GM12878 (cell line): ENCODE measurements at regions of chr16 and their contacts with region 1.

Region 1: DNA sequence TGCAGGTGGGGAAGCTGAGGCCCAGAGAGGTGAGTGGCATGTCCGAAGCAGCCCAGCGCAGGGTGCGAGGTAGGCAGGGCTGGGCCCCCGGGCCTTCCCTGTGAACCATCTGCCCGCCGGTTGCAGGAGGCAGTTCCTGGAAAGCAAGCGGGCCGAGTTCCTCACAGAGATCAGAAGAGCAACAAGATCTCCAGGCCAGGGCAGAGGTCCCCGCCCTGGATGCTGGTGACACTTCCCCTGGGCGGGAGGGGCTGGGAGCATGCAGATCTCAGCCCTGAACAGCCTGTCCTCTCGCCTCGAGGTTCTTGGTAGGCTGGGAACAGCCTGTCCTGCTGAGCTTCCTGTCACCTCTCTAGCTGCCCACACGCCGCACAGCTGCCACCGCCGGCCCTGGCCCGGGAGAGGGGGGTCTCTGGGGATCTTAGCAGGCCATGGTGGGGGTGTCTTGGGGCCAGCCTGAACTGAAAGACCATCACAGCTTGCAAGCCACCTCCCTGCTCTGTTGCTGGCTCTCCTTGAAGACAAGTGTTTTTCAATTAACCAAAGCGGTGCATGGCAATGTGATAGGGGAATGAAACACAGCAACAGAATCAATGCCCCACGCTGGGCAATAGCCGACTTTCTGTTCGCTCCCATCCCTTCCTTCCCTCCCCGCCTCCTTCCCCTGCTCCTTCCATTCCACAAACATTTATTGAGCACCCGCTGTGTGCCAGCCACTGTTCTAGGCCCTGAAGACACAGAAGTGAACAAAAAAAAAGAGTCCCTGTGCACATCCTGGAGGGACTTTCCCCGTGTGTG is 31.7 kb downstream of the SOCS1 start:
- DNase-seq: peak; percentile 57
- ATAC-seq: peak; percentile 75
- H3K4me3 ChIP-seq: peak overlapping the region; percentile 19; the same call in 1 of the 2 replicates
- H3K27ac ChIP-seq: peak overlapping the region; percentile 94
- H3K4me1 ChIP-seq: peaks cover 28% of the 10 kb centered on the region
- H3K27me3 ChIP-seq: no peaks in the 10 kb centered on the region
- CTCF ChIP-seq: no peak
- EP300 ChIP-seq: no peak
- POLR2A ChIP-seq: peak; percentile 55
- RAD21 ChIP-seq: no peak

Region 2: GRCh38 chr16:11201498-11202259 is 22.6 kb before region 1 on chr16:
- CTCF ChIA-PET with region 1: interaction called, 13 read pairs
- POLR2A ChIA-PET with region 1: interaction called, 32 read pairs
- RAD21 ChIA-PET with region 1: interaction called, 59 read pairs
- SMC1A ChIA-PET with region 1: interaction called, 23 read pairs
- in situ Hi-C with region 1: no loop called
- intact Hi-C with region 1: loop called (anchors 2 kb)
- DNase-seq: no peak
- ATAC-seq: peak; percentile 5
- H3K4me3 ChIP-seq: no peak overlapping the region
- H3K27ac ChIP-seq: peak overlapping the region; percentile 45
- H3K4me1 ChIP-seq: peaks cover 67% of the 10 kb centered on the region
- H3K27me3 ChIP-seq: no peaks in the 10 kb centered on the region
- CTCF ChIP-seq: no peak
- EP300 ChIP-seq: peak in 1 of 2 experiments; percentile 28; a peak in 1 of 4 replicates
- POLR2A ChIP-seq: no peak
- RAD21 ChIP-seq: no peak

Region 3: GRCh38 chr16:11208916-11209665 is 15.2 kb before region 1 on chr16:
- CTCF ChIA-PET with region 1: interaction called, 6 read pairs
- POLR2A ChIA-PET with region 1: interaction called, 32 read pairs
- RAD21 ChIA-PET with region 1: interaction called, 59 read pairs
- SMC1A ChIA-PET with region 1: interaction called, 34 read pairs
- in situ Hi-C with region 1: no loop called
- intact Hi-C with region 1: no loop called
- DNase-seq: peak; percentile 51
- ATAC-seq: peak; percentile 26
- H3K4me3 ChIP-seq: no peak overlapping the region
- H3K27ac ChIP-seq: peak overlapping the region; percentile 59
- H3K4me1 ChIP-seq: peaks cover 63% of the 10 kb centered on the region
- H3K27me3 ChIP-seq: no peaks in the 10 kb centered on the region
- CTCF ChIP-seq: no peak
- EP300 ChIP-seq: no peak
- POLR2A ChIP-seq: no peak
- RAD21 ChIP-seq: no peak

Region 4: GRCh38 chr16:11248133-11248532 is 23.8 kb after region 1 on chr16:
- CTCF ChIA-PET with region 1: interaction called, 6 read pairs
- POLR2A ChIA-PET with region 1: interaction called, 53 read pairs
- RAD21 ChIA-PET with region 1: interaction called, 76 read pairs
- SMC1A ChIA-PET with region 1: interaction called, 17 read pairs
- in situ Hi-C with region 1: no loop called
- intact Hi-C with region 1: no loop called
- DNase-seq: no peak
- ATAC-seq: no peak
- H3K4me3 ChIP-seq: no peak overlapping the region
- H3K27ac ChIP-seq: no peak overlapping the region
- H3K4me1 ChIP-seq: peaks cover 21% of the 10 kb centered on the region
- H3K27me3 ChIP-seq: no peaks in the 10 kb centered on the region
- CTCF ChIP-seq: no peak
- EP300 ChIP-seq: no peak
- POLR2A ChIP-seq: no peak
- RAD21 ChIP-seq: no peak